PC-9 (cell line): ENCODE measurements at regions of chr11 and their contacts with region 1.

Region 1: DNA sequence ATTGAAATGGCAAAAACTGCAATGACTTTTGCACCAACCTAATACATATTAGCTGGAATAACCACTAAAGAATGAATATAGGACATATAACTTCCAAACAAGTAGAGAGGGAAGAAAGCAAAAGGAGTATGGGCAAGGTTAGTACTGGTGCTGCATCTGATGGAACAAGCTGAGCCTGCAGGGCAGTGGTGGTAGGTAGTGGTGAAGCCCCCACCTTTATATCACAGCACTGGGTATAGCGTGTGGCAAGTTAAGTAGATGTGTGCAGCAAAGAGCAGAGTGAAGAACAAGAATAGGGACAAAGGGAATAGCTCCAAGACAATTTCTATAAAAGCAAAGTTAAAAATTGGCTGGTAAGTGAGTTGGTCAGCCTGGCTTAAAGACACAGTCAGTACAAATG is 62.3 kb downstream of the CTNND1 start:
- DNase-seq: no peak
- H3K4me3 ChIP-seq: no peak overlapping the region
- H3K27ac ChIP-seq: no peak overlapping the region
- H3K4me1 ChIP-seq: no peaks in the 10 kb centered on the region
- H3K27me3 ChIP-seq: no peaks in the 10 kb centered on the region
- CTCF ChIP-seq: no peak

Region 2: DNA sequence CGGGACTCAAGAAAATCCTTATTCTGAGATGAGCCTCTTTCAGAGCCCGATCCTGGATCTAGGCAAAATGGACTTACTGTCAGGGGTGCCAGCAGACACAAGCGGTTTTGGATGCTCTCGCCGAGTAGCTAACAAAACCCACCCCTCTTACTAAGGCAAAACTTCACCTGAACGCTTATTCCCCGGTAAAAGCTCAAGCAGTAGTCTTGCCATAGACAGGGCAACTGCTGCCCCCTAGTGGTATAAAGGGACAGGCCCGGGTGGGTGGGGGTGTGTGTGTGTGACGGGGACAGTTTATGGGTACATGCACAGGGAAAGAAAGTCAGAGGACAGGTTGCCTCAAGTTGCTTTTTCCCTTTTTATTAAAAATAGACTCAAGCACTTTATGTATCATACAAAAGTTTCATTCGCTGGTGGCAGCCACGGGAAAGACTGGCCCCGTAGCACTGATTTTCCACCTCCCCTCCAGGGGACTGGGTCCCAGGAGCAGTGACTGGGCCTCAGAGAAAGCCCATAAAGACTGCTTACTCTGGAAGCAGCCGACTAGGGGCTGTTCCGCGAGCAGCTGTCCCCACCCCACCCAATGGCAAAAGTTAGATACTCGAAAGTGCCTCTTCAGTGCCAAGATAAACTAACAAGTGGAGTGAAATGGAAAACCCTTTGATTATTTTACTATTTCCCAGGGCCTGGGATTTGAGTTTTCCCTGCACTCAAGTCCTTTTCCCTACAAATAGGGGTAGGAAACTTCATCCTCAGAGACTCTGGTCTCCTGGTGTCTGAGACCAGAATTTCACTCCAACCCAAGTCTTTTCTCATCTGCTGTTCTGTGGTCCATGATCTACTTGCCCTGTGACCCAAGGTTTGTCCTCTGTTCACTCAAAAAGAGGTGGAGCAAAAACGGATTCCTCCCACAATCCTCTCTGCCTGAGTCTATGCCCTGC is 178.8 kb before region 1 on chr11:
- CTCF ChIA-PET with region 1: no interaction called
- POLR2A ChIA-PET with region 1: no interaction called
- intact Hi-C with region 1: no loop called
- DNase-seq: peak; percentile 60 to 83
- H3K4me3 ChIP-seq: no peak overlapping the region
- H3K27ac ChIP-seq: no peak overlapping the region
- H3K4me1 ChIP-seq: peaks cover 3% of the 10 kb centered on the region; the same call in 1 of the 2 replicates
- H3K27me3 ChIP-seq: peaks cover 46% of the 10 kb centered on the region
- CTCF ChIP-seq: peak; percentile 98

Region 3: DNA sequence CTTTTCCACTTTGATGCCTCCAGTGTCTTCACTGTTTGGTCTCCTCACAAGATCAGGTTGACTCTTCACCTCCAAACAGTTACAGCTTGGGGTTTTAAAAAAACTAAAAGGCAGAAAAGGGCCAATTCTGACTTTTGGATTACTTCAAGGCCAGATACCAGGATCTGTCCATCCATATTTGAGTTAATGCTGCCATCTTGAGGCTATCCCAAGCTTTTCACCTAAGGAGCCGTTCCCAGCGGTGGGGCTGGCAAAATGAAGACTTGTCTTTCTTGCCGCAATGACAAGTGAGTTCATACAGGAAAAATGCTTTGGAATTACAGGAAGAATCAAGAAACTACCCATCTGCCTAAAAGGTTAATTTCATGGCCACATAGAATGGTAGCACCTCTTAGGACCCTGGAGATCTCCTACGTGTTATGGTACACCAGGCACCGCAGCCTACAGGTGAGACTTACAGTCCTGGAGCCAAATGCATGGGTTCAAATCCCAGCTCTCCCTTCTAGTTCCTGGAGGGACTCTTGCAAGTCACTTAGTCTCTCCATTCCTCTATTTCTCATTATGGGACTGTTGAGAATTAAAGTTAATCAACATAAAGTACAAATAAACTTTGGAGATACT is 690.0 kb after region 1 on chr11:
- CTCF ChIA-PET with region 1: no interaction called
- POLR2A ChIA-PET with region 1: no interaction called
- intact Hi-C with region 1: loop called (anchors 5 kb)
- DNase-seq: peak; percentile 65 to 67
- H3K4me3 ChIP-seq: no peak overlapping the region
- H3K27ac ChIP-seq: no peak overlapping the region
- H3K4me1 ChIP-seq: no peaks in the 10 kb centered on the region
- H3K27me3 ChIP-seq: 0 out of 2 replicates have a peak, but pooled peaks cover 3% of the 10 kb centered on the region
- CTCF ChIP-seq: peak; percentile 87